PC-3 (cell line): ENCODE measurements at regions of chr1 and their contacts with region 1.

Region 1: DNA sequence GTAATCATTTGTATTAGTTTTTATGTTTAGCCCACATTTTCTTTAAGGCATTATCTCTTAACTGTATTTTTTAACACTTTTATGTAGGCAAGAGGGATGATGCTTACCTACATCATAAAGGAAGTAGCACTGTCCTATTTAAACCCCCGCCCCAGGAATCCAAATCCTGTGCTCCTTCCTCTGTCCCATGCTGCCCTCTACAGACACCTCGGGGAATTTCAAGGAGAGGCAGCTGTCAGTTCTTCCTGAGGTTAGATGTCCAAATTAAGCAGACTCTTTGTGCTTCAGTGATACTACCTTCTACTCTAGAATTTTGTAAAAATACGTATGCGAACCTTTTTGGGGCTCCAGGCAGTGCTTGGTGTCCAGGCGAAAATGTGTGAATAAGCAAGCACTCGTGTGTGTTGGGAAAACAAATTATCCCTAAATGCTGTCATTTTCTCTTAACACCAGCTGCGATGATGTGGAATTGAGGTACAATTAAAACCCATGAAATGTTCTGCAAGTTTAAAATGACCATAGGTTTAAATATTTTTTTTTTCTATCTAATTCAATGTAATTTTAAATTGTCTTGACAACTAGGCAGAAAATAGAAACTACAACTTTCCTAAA is 19.2 kb downstream of the CRCT1 start:
- DNase-seq: peak; percentile 87
- ATAC-seq: peak; percentile 67
- H3K4me3 ChIP-seq: no peak overlapping the region
- H3K27ac ChIP-seq: no peak overlapping the region
- H3K4me1 ChIP-seq: no peaks in the 10 kb centered on the region
- H3K27me3 ChIP-seq: peaks cover 28% of the 10 kb centered on the region
- CTCF ChIP-seq: peak; percentile 93

Region 2: DNA sequence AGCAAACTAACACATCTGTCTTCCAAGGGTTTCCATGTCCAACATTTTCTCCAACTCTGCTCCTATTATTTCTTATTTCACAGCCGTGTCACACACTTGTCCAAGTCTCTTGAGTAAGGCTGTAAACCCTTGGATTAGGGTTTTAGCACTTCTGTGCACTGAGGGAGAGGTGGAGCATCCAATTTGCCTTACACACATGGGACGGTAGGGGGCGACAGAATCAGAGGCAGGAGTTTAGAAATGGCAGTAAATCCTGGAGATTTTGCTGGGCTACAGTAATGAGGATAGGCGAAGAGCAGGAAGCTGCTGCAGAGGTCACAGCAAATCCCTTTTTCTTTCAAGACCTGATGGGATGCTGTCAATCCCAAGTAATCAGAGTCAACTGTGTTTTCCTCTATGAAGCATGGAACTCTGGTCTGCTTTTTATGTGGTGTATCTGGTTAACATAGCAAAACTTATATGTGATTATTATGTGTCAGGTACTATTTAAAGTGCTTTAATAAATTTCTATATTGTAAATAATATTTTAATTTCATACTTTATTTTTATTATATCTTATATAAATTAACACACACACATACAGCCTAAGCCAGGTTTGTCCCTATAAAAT is 38.3 kb before region 1 on chr1:
- CTCF ChIA-PET with region 1: interaction called, 3 read pairs
- POLR2A ChIA-PET with region 1: no interaction called
- intact Hi-C with region 1: loop called (anchors 2 kb)
- DNase-seq: peak; percentile 58
- ATAC-seq: no peak
- H3K4me3 ChIP-seq: no peak overlapping the region
- H3K27ac ChIP-seq: no peak overlapping the region
- H3K4me1 ChIP-seq: no peaks in the 10 kb centered on the region
- H3K27me3 ChIP-seq: no peaks in the 10 kb centered on the region
- CTCF ChIP-seq: peak; percentile 84

Region 3: DNA sequence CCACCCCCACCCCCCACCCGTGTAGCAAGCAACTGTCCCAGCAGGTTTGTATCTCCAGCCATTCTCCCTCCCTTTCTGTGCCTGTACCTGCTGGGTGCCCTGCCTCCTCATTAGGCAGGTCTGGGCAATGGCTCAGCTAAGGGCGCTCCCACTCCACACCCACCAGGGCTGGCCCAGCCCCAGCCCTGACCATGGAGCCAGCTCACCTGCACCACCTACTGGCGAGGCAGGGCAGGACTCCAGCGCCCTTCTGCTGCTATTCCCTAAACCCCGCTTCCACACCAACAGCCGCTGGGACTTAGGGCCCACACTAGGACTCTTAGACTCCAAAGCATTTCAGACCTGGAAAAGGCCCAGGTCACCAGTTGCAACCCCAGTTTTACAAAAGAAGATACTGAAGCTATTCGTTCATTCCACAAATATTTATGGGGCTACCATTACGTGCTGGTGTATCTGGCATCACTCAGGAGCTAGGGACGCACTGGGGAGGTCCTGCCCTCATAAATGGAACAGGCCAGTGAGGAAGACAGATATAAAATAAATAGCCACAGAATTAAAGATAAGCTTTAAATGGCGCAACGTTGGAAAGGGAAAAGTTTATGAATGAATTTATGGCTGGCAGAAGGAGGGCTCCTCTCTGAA is 755.3 kb after region 1 on chr1:
- CTCF ChIA-PET with region 1: no interaction called
- POLR2A ChIA-PET with region 1: no interaction called
- intact Hi-C with region 1: no loop called
- DNase-seq: peak; percentile 40
- ATAC-seq: peak; percentile 53
- H3K4me3 ChIP-seq: no peak overlapping the region
- H3K27ac ChIP-seq: no peak overlapping the region
- H3K4me1 ChIP-seq: no peaks in the 10 kb centered on the region
- H3K27me3 ChIP-seq: peaks cover 55% of the 10 kb centered on the region
- CTCF ChIP-seq: peak; percentile 75

Region 4: DNA sequence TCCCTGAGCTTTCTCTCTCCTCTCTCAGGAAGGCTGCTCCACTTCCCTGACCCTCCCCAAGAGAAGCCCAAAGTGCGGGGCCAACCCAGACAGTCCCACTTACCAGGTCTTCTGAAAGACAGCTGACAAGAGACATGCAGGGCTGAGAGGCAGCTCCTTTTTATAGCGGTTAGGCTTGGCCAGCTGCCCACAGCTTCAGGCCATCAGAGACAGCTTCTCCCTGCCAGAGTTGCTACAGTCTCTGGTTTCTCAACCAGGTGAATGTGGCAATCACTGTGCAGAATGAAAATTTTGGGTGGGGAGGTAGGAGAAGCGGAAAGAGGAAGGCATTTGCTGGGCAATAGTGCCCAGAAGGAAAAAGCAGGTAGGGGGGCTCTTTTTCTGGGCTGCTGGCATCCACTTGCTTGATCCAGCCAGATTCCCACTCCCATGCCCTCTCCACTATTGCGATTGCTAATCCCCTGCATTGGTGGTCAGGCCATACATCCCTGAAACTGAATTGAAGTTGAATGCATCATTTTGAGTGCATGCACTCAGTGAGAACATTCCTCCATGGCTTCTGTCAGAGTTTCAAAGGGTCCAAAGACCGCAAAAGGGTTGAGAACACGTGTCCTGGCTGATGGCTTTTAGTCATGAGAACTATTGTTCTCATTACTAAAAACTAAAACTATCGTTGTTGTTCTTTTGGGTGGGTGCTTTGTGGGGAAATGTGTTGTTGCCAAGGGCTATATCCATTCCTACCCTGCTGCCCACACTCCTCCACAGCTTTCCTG is 857.7 kb after region 1 on chr1 and contains the start of gene S100A8:
- CTCF ChIA-PET with region 1: no interaction called
- POLR2A ChIA-PET with region 1: no interaction called
- intact Hi-C with region 1: no loop called
- DNase-seq: peak; percentile 82
- ATAC-seq: no peak
- H3K4me3 ChIP-seq: no peak within 1 kb of the TSS
- H3K27ac ChIP-seq: no peak within 1 kb of the TSS
- H3K4me1 ChIP-seq: peaks cover 29% of the 10 kb centered on the region
- H3K27me3 ChIP-seq: peaks cover 21% of the 10 kb centered on the region; the same call in 1 of the 2 replicates
- CTCF ChIP-seq: no peak
- total RNA-seq, gene S100A8: 0.29 TPM in 1 of 2 replicates, not detected in the other